GM23248 (cell line): ENCODE measurements at regions of chr1 and their contacts with region 1.

Region 1: DNA sequence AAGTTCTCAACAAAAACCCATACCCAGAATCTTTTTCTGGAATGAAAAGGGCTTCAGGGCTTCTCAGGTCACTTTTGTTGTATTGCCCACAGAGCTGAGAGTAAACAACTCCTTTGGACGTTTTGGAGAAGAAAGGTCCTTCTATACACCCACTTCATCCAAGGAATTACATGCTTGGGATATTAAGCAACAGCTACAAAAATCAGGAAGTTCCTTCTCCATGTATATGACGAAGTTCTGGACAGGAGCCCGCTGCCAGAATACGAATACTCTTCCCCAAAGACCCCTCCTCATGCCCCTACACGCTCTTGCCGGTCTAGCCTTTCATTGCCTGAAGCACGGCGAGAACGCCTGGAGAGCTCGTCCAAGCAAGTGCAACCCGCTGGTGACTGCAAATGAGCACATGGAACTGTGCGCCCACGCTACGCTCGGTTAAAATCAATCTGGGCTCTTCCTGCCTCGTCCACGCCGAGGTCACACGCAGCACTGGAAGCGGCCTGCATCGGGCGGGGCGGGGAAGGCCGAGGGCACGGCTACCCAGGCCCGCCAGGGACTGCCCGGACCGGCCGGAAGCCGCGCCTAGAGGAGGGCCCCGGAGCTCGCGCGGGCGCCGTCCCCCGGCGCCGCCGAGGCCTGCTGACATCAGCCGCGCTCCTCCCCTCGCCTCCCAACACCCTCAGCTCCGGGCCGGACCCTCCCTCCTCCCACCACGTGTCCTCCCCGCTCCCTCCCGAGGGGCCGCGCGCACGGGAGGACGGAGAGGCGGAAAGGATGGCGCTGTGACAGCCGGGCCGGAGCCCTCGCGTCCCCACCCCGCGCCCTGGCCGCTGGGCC is at the start of gene POGK:
- DNase-seq: peak; percentile 95
- H3K4me3 ChIP-seq: peak within 1 kb of the TSS; percentile 83
- H3K27ac ChIP-seq: peak within 1 kb of the TSS; percentile 74
- H3K4me1 ChIP-seq: peaks cover 24% of the 10 kb centered on the region
- H3K27me3 ChIP-seq: no peaks in the 10 kb centered on the region
- total RNA-seq, gene POGK: 25.5 and 26.9 TPM in 2 replicates

Region 2: GRCh38 chr1:165738794-165739193 is 1100.2 kb before region 1 on chr1:
- in situ Hi-C with region 1: loop called (anchors 25 kb)
- DNase-seq: no peak
- H3K4me3 ChIP-seq: no peak overlapping the region
- H3K27ac ChIP-seq: 0 out of 2 replicates have a peak overlapping the region, but pooled peaks have one; percentile 3
- H3K4me1 ChIP-seq: no peaks in the 10 kb centered on the region
- H3K27me3 ChIP-seq: no peaks in the 10 kb centered on the region

Region 3: DNA sequence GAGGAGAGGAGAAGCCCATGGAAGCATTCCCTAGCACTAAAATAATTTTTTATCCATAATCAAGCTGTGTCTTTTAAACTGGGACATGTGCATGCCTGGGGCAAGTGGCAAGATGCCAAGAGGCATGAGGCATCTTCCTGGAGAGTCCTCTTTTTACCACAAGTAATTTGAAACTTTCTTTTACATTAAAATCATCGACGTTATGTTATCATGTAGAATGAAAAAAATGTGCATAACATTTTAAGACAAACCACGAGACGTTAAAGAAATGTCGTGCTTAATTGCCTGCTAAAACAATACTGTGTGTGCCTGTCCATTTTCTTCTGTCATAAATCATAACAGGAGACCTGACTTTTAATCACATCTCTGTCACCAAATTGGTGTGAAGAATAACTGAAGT is 256.4 kb after region 1 on chr1:
- in situ Hi-C with region 1: no loop called
- DNase-seq: peak; percentile 63
- H3K4me3 ChIP-seq: no peak overlapping the region
- H3K27ac ChIP-seq: no peak overlapping the region
- H3K4me1 ChIP-seq: no peaks in the 10 kb centered on the region
- H3K27me3 ChIP-seq: peaks cover 13% of the 10 kb centered on the region; the same call in 1 of the 2 replicates